Activated CD4-positive, alpha-beta T cell treated with anti-CD3 and anti-CD28 coated beads for 36 hours (primary cell): ENCODE measurements at regions of chr12 and their contacts with region 1.

Region 1: DNA sequence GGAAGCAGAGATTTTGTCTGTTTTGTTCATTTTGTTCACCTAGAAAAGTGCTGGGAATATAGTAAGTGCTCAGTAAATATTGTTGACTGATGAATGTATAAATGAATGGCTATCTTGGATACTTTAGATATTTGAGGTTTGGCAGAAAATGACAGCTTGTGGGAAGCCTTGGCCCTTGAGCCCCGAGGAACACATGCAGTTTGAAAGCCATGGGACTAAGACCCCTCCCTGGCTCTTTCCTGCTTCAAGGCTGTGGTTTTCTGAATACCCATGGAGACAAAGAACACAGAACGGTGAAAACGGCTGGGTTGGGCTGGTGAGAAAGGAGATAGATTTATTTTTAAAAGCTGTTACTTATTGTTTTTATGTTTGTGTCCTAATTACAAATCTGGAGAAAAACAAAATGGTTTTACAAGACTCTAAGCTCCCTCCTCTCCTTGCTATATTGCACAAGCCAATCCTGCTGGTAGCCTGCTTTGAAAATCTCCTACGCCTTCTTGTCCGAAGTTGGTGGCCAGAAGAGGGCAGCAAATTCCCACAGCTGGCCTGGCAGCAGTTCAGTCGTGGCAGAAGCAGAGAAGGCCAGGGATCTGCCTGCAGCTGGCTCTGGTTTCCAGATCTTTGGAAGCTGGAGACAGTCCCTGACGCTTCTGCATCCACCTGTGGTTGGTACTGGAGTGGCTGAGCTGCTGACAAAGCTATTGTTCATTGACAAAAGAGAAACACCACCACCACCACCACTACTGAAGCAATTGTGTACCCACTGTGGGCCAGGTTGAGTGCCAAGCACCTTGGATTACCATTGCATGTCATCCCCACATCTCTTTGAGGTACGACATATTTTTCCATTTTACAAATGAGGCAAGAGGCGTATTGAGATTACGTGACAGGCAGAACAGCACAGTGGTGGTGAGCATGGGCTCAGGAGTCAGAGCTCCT is 5.2 kb upstream of the KRT85 start:
- DNase-seq: peak; percentile 76
- ATAC-seq: peak; percentile 47
- H3K4me3 Mint-ChIP-seq: no peak overlapping the region
- H3K27ac Mint-ChIP-seq: no peak overlapping the region
- H3K4me1 Mint-ChIP-seq: no peaks in the 10 kb centered on the region
- H3K27me3 Mint-ChIP-seq: peaks cover 4% of the 10 kb centered on the region

Region 2: DNA sequence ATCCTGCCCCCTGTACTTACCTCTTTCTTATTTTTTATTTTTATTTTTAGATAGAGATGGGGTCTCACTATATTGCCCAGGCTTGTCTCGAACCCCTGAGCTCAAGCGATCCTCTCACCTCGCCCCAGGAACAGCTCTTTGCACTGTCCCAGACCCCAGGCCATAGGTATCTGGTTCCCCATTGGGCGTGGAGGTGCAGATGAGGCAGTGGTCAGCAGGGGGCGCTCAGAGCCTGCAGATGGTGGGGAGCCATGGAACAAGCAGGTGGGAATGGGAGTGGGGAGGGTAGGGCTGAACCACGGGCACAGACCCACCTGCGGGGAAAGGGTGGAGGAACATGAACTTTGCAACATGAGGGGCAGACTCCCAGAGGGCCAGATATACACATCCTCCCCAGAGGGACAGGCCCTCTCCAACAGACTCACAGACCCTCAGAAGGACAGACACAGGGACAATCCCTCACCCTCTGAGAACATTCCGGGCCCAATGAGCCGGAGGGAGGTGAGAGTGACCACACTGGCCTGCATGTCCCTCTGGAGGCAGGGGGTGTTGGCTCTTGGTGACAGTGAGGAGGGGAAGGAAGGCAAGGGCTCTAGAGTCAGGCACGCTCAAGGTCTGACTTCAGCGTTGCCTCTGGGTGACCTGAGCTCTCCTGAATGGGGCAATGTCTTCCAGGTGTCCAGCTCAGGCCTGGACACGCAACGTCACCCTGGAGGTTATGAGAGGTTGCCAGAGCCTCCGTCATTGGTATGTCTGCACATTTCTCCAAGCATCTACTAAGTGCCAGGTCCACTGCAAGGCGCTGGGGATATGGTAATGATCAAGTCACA is 215.5 kb before region 1 on chr12:
- CTCF ChIA-PET with region 1: interaction called, 4 read pairs
- POLR2A ChIA-PET with region 1: no interaction called
- intact Hi-C with region 1: loop called in 1 of 2 experiments (anchors 5 kb)
- DNase-seq: peak; percentile 85
- ATAC-seq: peak; percentile 65
- H3K4me3 Mint-ChIP-seq: no peak overlapping the region
- H3K27ac Mint-ChIP-seq: no peak overlapping the region
- H3K4me1 Mint-ChIP-seq: peaks cover 27% of the 10 kb centered on the region
- H3K27me3 Mint-ChIP-seq: no peaks in the 10 kb centered on the region

Region 3: GRCh38 chr12:52383331-52383730 is 10.8 kb after region 1 on chr12:
- CTCF ChIA-PET with region 1: interaction called, 15 read pairs
- POLR2A ChIA-PET with region 1: no interaction called
- intact Hi-C with region 1: no loop called
- DNase-seq: no peak
- ATAC-seq: no peak
- H3K4me3 Mint-ChIP-seq: no peak overlapping the region
- H3K27ac Mint-ChIP-seq: no peak overlapping the region
- H3K4me1 Mint-ChIP-seq: peaks cover 6% of the 10 kb centered on the region
- H3K27me3 Mint-ChIP-seq: no peaks in the 10 kb centered on the region

Region 4: DNA sequence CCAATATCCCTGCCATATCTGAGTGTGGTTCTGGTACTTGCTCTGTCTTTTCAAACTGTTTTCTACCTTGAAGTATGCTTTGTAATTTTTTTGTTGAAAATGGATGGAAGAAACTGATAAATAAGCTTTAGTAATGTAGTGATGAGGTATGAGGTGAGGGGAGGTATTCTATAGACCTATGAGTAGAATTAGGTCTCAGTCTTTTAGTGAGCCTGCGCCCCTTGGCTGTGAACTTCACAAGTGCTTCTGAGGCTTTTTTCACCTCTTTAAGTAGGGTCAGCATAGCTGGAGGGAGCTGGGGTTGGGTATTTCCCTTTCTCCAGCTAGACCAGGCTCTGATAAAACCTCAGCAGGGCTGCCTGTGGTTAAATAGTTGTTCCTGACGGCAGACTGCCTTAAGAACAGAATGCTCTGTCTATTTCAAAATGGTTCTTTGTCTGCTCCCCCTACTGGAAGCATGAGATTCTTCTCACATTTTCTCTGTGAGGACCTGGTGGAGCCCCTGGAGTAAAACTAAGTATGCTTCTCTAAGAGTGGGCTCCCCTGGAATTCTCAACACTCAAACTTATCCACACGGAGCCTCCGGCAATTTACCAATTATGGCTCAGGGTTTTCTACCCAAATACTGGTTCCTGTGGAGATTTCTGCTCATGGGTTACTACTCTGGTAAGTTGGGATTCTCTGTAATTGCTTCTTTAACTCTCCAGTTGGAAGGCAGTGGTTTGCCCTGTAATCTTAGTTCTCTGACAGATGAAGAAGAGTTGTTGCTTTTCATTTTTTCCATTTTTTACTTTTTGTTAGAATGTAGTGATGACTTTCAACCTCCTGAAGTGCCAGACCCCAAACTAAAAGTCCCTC is 134.6 kb after region 1 on chr12:
- CTCF ChIA-PET with region 1: no interaction called
- POLR2A ChIA-PET with region 1: no interaction called
- intact Hi-C with region 1: loop called in 1 of 2 experiments (anchors 5 kb)
- DNase-seq: no peak
- ATAC-seq: peak; percentile 58
- H3K4me3 Mint-ChIP-seq: no peak overlapping the region
- H3K27ac Mint-ChIP-seq: no peak overlapping the region
- H3K4me1 Mint-ChIP-seq: no peaks in the 10 kb centered on the region
- H3K27me3 Mint-ChIP-seq: peaks cover 24% of the 10 kb centered on the region

Region 5: DNA sequence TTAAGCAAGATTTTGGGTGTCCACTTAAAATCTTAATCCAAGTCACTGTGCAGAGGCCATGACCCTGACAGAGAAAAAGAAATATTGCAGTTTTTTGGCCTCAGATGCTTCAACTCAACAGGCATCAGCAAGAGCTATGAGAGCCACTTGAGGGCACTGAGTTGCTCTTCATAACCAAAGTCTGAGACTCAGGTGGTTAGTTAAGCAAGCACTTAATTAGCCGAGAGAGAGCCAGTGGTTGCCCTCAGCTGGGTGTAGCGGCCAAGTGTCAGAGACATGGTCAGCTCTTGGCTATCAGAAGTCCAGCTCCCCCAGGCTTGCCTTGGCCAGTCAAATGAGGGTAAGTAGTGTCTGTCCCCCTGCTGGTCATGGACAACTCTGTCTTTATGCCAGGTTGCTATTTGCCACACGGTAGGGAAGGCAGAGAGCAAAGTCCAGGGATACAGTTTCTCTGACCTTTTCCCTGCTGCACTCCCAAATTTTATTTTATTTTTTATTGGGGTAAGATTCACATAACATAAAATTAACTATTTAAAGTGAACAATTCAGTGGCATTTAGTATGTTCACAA is 189.5 kb after region 1 on chr12:
- CTCF ChIA-PET with region 1: no interaction called
- POLR2A ChIA-PET with region 1: no interaction called
- intact Hi-C with region 1: loop called in 1 of 2 experiments (anchors 10 kb)
- DNase-seq: no peak
- ATAC-seq: no peak
- H3K4me3 Mint-ChIP-seq: no peak overlapping the region
- H3K27ac Mint-ChIP-seq: no peak overlapping the region
- H3K4me1 Mint-ChIP-seq: no peaks in the 10 kb centered on the region
- H3K27me3 Mint-ChIP-seq: peaks cover 7% of the 10 kb centered on the region

Region 6: GRCh38 chr12:52870351-52871290 is 498.1 kb after region 1 on chr12:
- CTCF ChIA-PET with region 1: interaction called, 11 read pairs
- POLR2A ChIA-PET with region 1: no interaction called
- intact Hi-C with region 1: loop called in 1 of 2 experiments (anchors 2 kb)
- DNase-seq: peak; percentile 90
- ATAC-seq: peak; percentile 80
- H3K4me3 Mint-ChIP-seq: no peak overlapping the region
- H3K27ac Mint-ChIP-seq: no peak overlapping the region
- H3K4me1 Mint-ChIP-seq: peaks cover 22% of the 10 kb centered on the region
- H3K27me3 Mint-ChIP-seq: peaks cover 4% of the 10 kb centered on the region